HEK293 (cell line): ENCODE measurements at regions of chr2 and their contacts with region 1.

Region 1: DNA sequence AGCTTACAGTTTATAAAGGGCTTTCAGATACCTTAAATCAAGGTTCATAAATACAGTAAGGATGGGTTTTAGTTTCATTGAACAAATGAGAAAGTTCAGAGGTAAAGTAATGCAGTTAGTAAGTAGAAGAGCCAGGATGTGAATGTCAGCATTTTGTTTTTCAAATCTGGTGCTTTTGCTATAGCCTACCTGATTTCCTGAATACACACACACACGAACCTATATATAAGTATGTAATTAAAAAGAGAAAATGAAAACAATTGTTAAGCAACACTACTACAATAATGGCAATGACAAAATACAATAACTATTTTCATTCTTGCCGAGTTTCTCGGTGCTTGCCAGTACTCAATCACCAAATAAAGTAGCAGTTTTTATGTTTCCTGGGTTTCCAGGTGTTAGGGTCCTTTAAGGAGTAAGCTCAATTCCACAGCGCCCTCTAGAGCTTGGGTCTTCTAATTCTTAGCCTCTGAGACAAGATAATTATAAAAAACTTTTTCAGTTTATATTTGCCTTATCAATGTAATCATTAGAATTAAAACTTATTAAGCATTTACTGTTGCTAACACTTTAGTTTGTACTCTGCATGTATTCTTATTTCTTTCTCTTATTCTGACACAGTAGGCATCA is 512.9 kb upstream of the ACVR2A start:
- H3K4me3 ChIP-seq: no peak overlapping the region
- H3K27ac ChIP-seq: no peak overlapping the region
- H3K4me1 ChIP-seq: no peaks in the 10 kb centered on the region
- CTCF ChIP-seq: no peak

Region 2: GRCh38 chr2:146844226-146844990 is 487.5 kb before region 1 on chr2:
- CTCF ChIA-PET with region 1: no interaction called
- POLR2A ChIA-PET with region 1: no interaction called
- H3K4me3 ChIP-seq: no peak overlapping the region
- H3K27ac ChIP-seq: no peak overlapping the region
- H3K4me1 ChIP-seq: no peaks in the 10 kb centered on the region
- CTCF ChIP-seq: no peak

Region 3: DNA sequence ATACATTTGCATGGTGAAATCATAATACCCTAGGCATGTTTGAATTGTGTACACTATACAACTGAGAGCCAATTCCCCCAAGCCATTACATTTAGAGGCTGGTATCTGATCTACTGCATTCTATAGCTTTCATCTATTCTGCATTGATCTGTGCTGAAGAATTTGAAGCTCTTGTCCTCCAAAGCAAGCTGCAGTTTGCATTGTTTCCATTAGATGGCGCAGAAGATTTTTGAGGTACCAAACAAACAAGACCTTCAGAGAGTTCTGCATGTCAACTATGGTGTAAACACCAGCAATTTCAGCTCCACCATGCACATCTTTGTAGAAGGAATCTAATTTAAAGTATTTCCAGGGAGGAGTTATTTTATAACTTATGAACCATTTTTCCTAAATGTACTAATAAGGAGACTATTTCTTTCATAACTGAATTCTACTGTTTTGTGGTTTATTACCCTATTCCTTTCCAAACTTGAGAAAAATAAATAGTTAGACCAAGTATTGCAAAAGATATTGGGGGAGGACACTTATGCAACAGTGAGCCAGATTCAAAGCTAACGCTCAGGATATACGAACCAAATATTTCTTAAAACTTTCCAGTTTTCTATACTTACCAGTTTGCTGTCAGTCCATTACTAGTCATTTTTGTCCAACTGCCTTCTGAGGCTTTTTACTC is 248.9 kb before region 1 on chr2:
- CTCF ChIA-PET with region 1: interaction called, 23 read pairs
- POLR2A ChIA-PET with region 1: interaction called, 6 read pairs
- H3K4me3 ChIP-seq: no peak overlapping the region
- H3K27ac ChIP-seq: no peak overlapping the region
- H3K4me1 ChIP-seq: no peaks in the 10 kb centered on the region
- CTCF ChIP-seq: peak; percentile 15; the same call in 1 of the 2 replicates